Activated B cell treated with CpG ODN at 0.5 μM for 24 hours (primary cell): ENCODE measurements at regions of chr6 and their contacts with region 1.

Region 1: DNA sequence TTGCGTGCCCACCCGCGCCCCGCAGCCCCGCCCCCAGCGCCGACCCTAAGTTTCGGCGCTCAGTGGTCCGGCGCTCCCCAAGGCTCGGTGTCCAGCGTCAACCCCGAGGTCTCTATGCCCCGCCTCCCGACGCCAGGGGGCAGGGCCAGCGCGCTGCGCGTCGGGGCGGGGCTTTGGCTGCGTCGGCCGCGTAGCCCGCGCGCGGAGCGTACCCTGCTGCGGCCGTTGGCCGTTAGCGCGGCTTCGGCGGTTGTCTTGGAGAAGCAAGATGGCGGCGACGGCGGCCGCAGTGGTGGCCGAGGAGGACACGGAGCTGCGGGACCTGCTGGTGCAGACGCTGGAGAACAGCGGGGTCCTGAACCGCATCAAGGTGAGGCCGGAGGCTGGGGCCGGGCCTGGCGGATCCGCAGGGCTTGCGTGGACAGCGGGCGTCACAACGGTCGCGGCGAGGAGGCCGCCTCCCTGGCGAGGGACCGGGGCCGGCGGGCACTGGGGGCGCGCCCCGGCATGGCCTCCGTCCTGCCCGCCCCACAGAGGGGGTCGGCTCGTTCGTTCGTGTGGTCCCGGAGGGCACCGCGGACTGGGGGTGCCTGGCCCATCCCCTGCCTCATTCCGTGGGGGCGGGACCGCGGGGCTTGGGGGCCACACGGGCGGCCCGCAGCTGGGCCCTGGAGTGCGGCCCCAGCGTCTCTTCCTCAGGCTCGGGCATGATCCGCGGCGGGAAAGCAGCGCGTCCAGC is at the start of gene CEP43:
- DNase-seq: peak; percentile 95
- ATAC-seq: peak; percentile 96
- H3K4me3 Mint-ChIP-seq: peak within 1 kb of the TSS; percentile 90
- H3K27ac Mint-ChIP-seq: peak within 1 kb of the TSS; percentile 66
- H3K4me1 Mint-ChIP-seq: peaks cover 29% of the 10 kb centered on the region
- H3K27me3 Mint-ChIP-seq: no peaks in the 10 kb centered on the region
- CTCF ChIP-seq: no peak
- total RNA-seq, gene CEP43: 26.8 and 31.0 TPM in 2 replicates

Region 2: GRCh38 chr6:166342349-166343149 is 656.8 kb before region 1 on chr6 and contains the start of gene SFT2D1:
- CTCF ChIA-PET with region 1: no interaction called
- POLR2A ChIA-PET with region 1: no interaction called
- intact Hi-C with region 1: loop called (anchors 5 kb)
- DNase-seq: peak; percentile 84
- ATAC-seq: peak; percentile 77
- H3K4me3 Mint-ChIP-seq: peak within 1 kb of the TSS; percentile 92
- H3K27ac Mint-ChIP-seq: peak within 1 kb of the TSS; percentile 89
- H3K4me1 Mint-ChIP-seq: peaks cover 16% of the 10 kb centered on the region
- H3K27me3 Mint-ChIP-seq: no peaks in the 10 kb centered on the region
- CTCF ChIP-seq: no peak
- total RNA-seq, gene SFT2D1: 44.6 and 49.5 TPM in 2 replicates

Region 3: GRCh38 chr6:166907373-166907841 is 91.9 kb before region 1 on chr6:
- CTCF ChIA-PET with region 1: no interaction called
- POLR2A ChIA-PET with region 1: no interaction called
- intact Hi-C with region 1: no loop called
- DNase-seq: no peak
- ATAC-seq: peak; percentile 86
- H3K4me3 Mint-ChIP-seq: peak overlapping the region; percentile 49
- H3K27ac Mint-ChIP-seq: peak overlapping the region; percentile 84
- H3K4me1 Mint-ChIP-seq: peaks cover 63% of the 10 kb centered on the region
- H3K27me3 Mint-ChIP-seq: no peaks in the 10 kb centered on the region
- CTCF ChIP-seq: no peak

Region 4: DNA sequence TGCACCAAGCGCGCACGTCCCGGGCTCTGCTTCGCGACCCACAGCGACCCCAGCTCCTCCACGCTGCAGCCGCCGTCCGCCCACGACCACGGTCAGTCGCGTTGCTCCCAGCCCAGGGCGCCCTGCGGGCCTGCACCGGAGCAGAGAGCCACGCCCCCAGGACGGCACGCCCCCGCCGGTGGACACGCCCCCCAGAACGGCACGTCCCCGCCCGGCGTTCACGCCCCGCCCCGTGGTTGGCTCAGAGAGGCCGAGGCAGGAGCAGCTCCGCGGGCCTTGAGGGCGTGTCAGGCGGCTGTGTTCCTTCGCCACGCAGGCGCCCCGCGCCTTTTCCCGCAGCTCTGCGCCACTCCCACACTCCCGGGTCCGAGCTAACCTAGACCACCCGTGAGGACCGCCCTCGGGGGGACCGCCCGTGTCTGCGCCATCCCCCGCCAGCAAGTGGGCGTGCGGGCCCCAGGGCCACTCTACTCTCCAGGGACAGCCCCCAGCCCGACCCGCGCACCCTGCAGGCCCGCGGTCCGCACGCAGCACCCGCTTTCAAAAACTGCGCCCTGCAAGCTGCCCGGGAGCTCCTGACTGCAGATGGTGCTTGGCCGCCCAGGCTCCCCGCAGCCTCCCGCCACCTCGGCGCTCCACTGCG is 42.7 kb before region 1 on chr6 and contains the start of gene RNASET2:
- CTCF ChIA-PET with region 1: no interaction called
- POLR2A ChIA-PET with region 1: interaction called, 8 read pairs
- intact Hi-C with region 1: loop called (anchors 1 kb)
- DNase-seq: peak; percentile 100
- ATAC-seq: peak; percentile 82
- H3K4me3 Mint-ChIP-seq: peak within 1 kb of the TSS; percentile 91
- H3K27ac Mint-ChIP-seq: peak within 1 kb of the TSS; percentile 100
- H3K4me1 Mint-ChIP-seq: peaks cover 76% of the 10 kb centered on the region
- H3K27me3 Mint-ChIP-seq: no peaks in the 10 kb centered on the region
- CTCF ChIP-seq: no peak
- total RNA-seq, gene RNASET2: 118 and 135 TPM in 2 replicates

Region 5: GRCh38 chr6:167079853-167080297 is 80.6 kb after region 1 on chr6:
- CTCF ChIA-PET with region 1: no interaction called
- POLR2A ChIA-PET with region 1: no interaction called
- intact Hi-C with region 1: loop called (anchors 1 kb)
- DNase-seq: peak; percentile 65
- ATAC-seq: peak; percentile 99
- H3K4me3 Mint-ChIP-seq: peak overlapping the region; percentile 54
- H3K27ac Mint-ChIP-seq: peak overlapping the region; percentile 91
- H3K4me1 Mint-ChIP-seq: peaks cover 52% of the 10 kb centered on the region
- H3K27me3 Mint-ChIP-seq: no peaks in the 10 kb centered on the region
- CTCF ChIP-seq: peak; percentile 51

Region 6: DNA sequence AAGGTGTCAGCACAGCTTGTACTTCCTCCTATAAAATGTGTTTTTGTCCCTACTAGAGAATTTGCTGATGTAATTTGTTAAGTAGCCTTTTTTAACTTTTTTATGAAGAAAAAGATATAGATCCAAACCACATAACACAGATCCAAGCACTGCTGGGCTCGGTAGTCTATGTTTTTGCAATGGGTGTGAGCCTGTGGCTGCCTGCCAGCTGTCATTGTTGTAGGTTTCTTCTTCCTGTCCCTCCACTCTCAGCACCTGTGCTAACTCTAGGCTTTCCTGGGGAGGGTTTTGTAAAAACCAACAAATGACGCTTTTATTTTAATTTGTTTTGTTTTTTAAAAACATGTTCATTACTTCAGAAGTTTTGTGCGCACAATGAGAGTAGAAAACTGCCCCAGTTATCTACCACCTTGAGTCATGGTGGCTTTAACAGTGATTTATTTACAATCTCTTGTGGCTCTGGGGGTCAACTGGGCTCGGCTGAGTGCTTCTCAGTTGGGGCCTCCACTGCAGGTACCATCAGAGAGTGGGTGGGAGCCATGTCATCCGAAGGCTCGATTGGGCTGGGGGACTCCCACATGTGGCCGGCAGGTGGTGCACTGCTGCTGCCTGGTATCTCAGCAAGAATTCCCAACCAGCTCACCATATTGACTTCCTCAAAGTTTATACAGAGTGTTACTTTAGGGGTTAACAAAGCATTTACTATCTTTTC is 120.5 kb after region 1 on chr6:
- CTCF ChIA-PET with region 1: interaction called, 3 read pairs
- POLR2A ChIA-PET with region 1: interaction called, 17 read pairs
- intact Hi-C with region 1: no loop called
- DNase-seq: peak; percentile 19
- ATAC-seq: no peak
- H3K4me3 Mint-ChIP-seq: peak overlapping the region; percentile 91
- H3K27ac Mint-ChIP-seq: peak overlapping the region; percentile 89
- H3K4me1 Mint-ChIP-seq: peaks cover 95% of the 10 kb centered on the region
- H3K27me3 Mint-ChIP-seq: no peaks in the 10 kb centered on the region
- CTCF ChIP-seq: no peak

Region 7: DNA sequence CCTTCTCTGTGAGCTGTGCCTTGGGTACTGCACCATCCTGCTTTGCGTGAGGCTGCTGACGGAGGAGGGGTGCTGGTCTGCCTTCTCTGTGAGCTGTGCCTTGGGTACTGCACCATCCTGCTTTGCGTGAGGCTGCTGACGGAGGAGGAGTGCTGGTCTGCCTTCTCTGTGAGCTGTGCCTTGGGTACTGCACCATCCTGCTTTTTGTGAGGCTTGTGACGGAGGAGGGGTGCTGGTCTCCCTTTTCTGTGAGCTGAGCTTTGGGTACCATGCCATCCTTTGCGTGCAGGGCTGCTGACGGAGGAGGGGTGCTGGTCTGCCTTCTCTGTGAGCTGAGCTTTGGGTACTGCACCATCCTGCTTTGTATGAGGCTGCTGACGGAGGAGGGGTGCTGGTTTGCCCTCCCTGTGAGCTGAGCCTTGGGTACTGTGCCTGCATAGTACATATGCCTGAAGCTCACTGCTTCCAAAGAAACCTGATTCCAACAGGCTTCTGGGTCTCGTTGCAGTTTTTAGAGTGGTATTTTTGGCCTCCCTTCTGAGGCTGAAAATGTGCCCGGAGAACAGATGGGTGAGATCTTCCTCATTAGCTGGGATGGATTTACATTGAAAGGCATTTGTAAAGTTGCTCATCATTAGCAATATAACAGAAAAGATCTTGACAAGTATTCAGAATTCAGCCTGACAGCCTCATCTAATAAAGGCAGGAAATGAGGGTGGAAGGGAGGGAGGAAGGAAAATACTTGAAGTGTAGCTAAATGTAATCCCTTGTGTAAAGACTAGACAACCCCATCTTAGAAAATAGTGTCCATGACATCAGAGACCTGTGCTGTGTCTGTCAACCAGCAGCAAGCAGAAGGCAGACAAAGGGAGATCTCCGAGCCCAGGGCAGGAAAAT is 245.0 kb after region 1 on chr6:
- CTCF ChIA-PET with region 1: no interaction called
- POLR2A ChIA-PET with region 1: no interaction called
- intact Hi-C with region 1: no loop called
- DNase-seq: no peak
- ATAC-seq: no peak
- H3K4me3 Mint-ChIP-seq: no peak overlapping the region
- H3K27ac Mint-ChIP-seq: no peak overlapping the region
- H3K4me1 Mint-ChIP-seq: peaks cover 5% of the 10 kb centered on the region
- H3K27me3 Mint-ChIP-seq: peaks cover 7% of the 10 kb centered on the region
- CTCF ChIP-seq: no peak

Region 8: DNA sequence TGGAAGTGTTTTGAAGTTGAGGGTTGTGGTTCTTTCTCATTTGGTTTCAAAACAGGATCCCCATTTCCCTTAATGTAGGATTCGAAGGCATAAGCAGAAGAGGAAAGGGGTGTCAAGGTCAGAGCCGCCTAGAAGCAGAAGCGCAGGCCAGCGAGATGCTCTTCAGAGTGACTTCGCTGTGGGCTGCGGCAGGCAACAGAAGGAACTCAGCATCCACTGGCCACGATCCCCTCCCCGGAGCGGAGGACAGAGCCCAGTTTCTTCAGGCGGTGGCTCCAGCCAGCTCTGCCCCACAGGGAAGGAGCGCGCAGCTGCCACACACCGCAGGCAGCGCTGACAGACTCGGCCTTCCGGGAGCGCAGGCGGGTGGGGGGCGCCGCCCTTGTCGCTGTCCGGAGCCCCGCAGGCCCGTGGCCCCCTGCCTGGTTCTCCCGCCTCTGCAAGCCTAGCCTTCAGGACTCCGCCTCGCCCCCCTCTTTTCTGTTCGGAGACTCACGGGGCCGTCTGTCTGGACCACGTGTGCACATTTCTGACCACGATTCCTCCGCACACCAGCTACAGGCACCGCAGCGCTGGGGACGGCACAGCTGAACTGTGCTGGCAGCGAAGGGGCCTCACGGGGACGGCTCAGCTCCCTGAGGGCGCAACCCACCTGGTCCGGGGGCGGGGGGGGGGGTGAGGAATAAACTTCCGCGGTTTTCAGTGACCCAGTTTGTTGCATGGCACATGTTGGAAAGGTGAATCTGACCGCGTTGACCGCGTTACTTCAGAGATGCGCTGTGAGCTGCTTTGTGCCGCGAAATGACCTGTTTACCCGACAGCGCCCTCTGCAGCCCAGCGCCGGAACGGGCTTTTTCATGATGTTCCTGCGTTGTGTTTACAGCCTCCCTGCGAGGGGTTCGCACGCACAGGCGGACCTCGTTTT is 351.7 kb after region 1 on chr6:
- CTCF ChIA-PET with region 1: no interaction called
- POLR2A ChIA-PET with region 1: no interaction called
- intact Hi-C with region 1: loop called (anchors 5 kb)
- DNase-seq: peak; percentile 77
- ATAC-seq: peak; percentile 77
- H3K4me3 Mint-ChIP-seq: peak overlapping the region; percentile 89
- H3K27ac Mint-ChIP-seq: peak overlapping the region; percentile 74
- H3K4me1 Mint-ChIP-seq: peaks cover 24% of the 10 kb centered on the region
- H3K27me3 Mint-ChIP-seq: peaks cover 21% of the 10 kb centered on the region
- CTCF ChIP-seq: peak; percentile 43